SK-N-SH (cell line): ENCODE measurements at regions of chr2 and their contacts with region 1.

Region 1: DNA sequence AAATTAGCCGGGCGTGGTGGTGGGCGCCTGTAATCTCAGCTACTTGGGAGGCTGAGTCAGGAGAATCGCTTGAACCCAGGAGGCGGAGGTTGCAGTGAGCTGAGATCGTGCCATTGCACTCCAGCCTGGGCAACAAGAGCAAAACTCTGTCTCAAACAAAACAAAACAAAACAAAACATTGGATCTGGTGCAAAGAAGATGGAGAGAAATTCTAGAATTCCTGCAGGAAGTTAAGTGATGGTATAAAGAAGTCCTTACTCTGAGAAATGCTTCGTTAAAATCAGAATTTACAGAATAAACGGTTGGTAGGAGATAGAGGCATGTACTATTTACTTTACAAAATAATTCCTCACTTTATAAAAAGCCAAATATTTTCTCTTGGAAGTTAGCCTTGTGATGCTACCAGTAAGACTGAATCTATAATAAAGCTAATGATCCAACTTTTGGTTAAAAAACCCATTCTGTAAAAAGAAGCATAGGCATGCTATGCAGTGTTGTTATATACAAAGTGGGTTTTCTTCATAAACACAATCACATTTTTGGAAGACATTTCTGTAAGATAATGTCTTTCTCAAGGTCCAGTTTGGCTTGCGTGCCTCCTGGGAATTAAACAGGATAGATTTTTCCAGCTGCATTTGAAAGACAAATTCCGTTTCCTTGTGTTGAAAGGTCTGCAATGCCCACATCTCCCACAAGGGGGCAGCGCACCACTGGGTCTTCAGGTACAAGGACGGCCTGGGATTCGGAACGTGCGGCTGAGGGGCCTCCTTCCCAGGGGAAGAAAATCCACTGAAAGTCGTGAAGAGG is 35.6 kb upstream of the PNO1 start:
- DNase-seq: peak; percentile 73
- H3K4me3 ChIP-seq: peak overlapping the region in 1 of 2 experiments; percentile 47; a peak in 1 of 4 replicates
- H3K27ac ChIP-seq: no peak overlapping the region
- H3K4me1 ChIP-seq: peaks cover 0 to 9% of the 10 kb centered on the region in 2 experiments; a peak in 1 of 4 replicates
- H3K27me3 ChIP-seq: no peaks in the 10 kb centered on the region
- CTCF ChIP-seq: peak; percentile 97
- EP300 ChIP-seq: no peak
- RAD21 ChIP-seq: peak; percentile 93

Region 2: GRCh38 chr2:68110102-68110501 is 12.0 kb before region 1 on chr2:
- CTCF ChIA-PET with region 1: interaction called, 15 read pairs
- POLR2A ChIA-PET with region 1: no interaction called
- DNase-seq: no peak
- H3K4me3 ChIP-seq: no peak overlapping the region
- H3K27ac ChIP-seq: no peak overlapping the region
- H3K4me1 ChIP-seq: no peaks in the 10 kb centered on the region
- H3K27me3 ChIP-seq: no peaks in the 10 kb centered on the region
- CTCF ChIP-seq: no peak
- EP300 ChIP-seq: no peak
- RAD21 ChIP-seq: no peak; the same call in 1 of the 2 replicates

Region 3: DNA sequence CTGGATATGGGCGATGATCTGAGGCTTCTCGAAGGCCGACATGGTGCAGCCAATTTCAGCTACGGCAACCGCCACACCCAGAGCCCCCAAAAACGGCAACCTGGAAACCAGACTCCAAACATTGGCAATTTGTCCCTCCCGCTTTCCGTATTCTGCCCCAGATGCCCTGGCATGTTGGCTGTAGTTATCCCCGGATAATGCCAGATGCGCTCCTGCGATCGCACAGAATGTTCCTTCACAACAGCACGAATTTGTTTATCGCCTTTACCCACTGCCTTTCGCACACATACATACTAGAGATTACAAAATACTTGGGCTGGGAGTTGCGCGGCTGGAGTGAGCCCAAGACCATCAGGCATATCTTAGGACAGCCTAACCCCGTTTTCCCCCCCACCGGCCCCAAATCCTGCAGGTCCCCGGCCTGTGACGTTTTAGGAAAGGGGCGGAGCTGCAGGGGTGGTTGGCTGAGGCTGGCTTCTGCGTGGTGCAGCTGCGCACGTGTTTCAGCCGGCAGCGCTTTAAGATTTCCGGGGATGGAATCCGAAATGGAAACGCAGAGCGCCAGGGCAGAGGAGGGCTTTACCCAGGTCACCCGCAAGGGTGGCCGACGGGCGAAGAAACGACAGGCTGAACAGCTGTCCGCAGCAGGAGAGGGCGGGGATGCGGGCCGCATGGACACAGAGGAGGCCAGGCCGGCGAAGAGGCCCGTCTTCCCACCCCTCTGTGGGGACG is 35.5 kb after region 1 on chr2 and contains the start of gene PNO1:
- CTCF ChIA-PET with region 1: interaction called, 11 read pairs
- POLR2A ChIA-PET with region 1: no interaction called
- DNase-seq: peak; percentile 96
- H3K4me3 ChIP-seq: peak within 1 kb of the TSS; percentile 90 to 97
- H3K27ac ChIP-seq: peak within 1 kb of the TSS; percentile 94 to 97
- H3K4me1 ChIP-seq: peaks cover 0 to 5% of the 10 kb centered on the region in 2 experiments; a peak in 2 of 4 replicates
- H3K27me3 ChIP-seq: no peaks in the 10 kb centered on the region
- CTCF ChIP-seq: no peak
- EP300 ChIP-seq: no peak
- RAD21 ChIP-seq: peak; percentile 11; the same call in 1 of the 2 replicates
- polyA plus RNA-seq, gene PNO1: 16.8 and 20.6 TPM in 2 replicates

Region 4: DNA sequence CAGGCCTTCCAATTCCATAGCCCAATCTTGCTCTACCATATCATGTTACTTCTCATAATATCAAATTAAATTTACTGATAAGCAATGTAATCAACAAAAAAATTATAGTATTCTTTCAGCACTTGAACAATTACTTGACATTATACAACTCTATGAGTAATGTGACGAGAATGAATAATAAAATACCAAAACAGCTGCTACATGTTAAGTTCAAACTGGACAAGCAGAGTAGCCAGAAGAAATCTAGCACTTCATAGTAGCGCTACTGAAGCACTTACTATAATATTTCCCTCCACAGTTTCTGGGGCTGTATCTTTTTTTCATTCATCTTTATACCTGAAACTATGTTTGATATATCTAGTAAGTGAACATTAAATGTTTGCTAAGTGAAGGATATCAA is 115.3 kb after region 1 on chr2:
- CTCF ChIA-PET with region 1: interaction called, 17 read pairs
- POLR2A ChIA-PET with region 1: no interaction called
- DNase-seq: no peak
- H3K4me3 ChIP-seq: no peak overlapping the region
- H3K27ac ChIP-seq: peak overlapping the region in 1 of 2 experiments; percentile 22; a peak in 1 of 4 replicates
- H3K4me1 ChIP-seq: peaks cover 25 to 38% of the 10 kb centered on the region in 2 experiments; a peak in 3 of 4 replicates
- H3K27me3 ChIP-seq: no peaks in the 10 kb centered on the region
- CTCF ChIP-seq: no peak
- EP300 ChIP-seq: no peak
- RAD21 ChIP-seq: no peak

Region 5: GRCh38 chr2:68251187-68251854 is 129.2 kb after region 1 on chr2:
- CTCF ChIA-PET with region 1: interaction called, 12 read pairs
- POLR2A ChIA-PET with region 1: no interaction called
- DNase-seq: peak; percentile 65
- H3K4me3 ChIP-seq: peak overlapping the region; percentile 88 to 99
- H3K27ac ChIP-seq: peak overlapping the region; percentile 90 to 96
- H3K4me1 ChIP-seq: peaks cover 18 to 40% of the 10 kb centered on the region in 2 experiments
- H3K27me3 ChIP-seq: no peaks in the 10 kb centered on the region
- CTCF ChIP-seq: peak; percentile 71
- EP300 ChIP-seq: no peak
- RAD21 ChIP-seq: peak; percentile 71

Region 6: DNA sequence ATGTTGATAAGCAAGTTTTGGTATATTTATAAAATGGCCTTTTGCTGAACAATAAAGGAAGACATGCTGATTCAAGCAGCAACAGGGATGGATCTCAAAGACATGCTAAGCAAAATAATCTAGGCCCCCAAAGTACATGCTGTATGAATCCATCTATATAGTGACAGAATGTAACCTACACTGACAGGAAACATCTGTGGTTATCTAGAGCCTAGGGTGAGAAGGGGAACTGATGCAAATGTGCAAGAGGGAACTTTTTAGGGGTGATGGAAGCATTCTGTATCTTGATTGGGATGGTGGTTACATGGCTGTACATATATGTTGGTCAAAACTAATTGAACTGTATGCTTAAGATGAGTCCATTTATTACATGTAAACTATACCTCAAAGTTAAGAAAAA is 173.4 kb after region 1 on chr2:
- CTCF ChIA-PET with region 1: interaction called, 47 read pairs
- POLR2A ChIA-PET with region 1: no interaction called
- DNase-seq: no peak
- H3K4me3 ChIP-seq: no peak overlapping the region
- H3K27ac ChIP-seq: no peak overlapping the region
- H3K4me1 ChIP-seq: no peaks in the 10 kb centered on the region; a peak in 1 of 4 replicates
- H3K27me3 ChIP-seq: no peaks in the 10 kb centered on the region
- CTCF ChIP-seq: no peak
- EP300 ChIP-seq: no peak
- RAD21 ChIP-seq: no peak

Region 7: GRCh38 chr2:68441179-68441993 is 319.3 kb after region 1 on chr2:
- CTCF ChIA-PET with region 1: interaction called, 49 read pairs
- POLR2A ChIA-PET with region 1: no interaction called
- DNase-seq: peak; percentile 72
- H3K4me3 ChIP-seq: peak overlapping the region in 1 of 2 experiments; percentile 26; a peak in 1 of 4 replicates
- H3K27ac ChIP-seq: no peak overlapping the region
- H3K4me1 ChIP-seq: peaks cover 0 to 3% of the 10 kb centered on the region in 2 experiments; a peak in 1 of 4 replicates
- H3K27me3 ChIP-seq: no peaks in the 10 kb centered on the region
- CTCF ChIP-seq: peak; percentile 94
- EP300 ChIP-seq: no peak
- RAD21 ChIP-seq: peak; percentile 91